ENCODE measurements at regions of chr12 and their contacts with region 1.

Region 1: GRCh38 chr12:76031537-76032073 is at the start of gene PHLDA1:
- DNase-seq: peak; percentile 94
- H3K4me3 Mint-ChIP-seq: peak within 1 kb of the TSS; percentile 97
- H3K27ac Mint-ChIP-seq: peak within 1 kb of the TSS; percentile 97
- H3K4me1 Mint-ChIP-seq: peaks cover 45% of the 10 kb centered on the region
- H3K27me3 Mint-ChIP-seq: no peaks in the 10 kb centered on the region
- total RNA-seq, gene PHLDA1: 43.2 and 44.2 TPM in 2 replicates

Region 2: DNA sequence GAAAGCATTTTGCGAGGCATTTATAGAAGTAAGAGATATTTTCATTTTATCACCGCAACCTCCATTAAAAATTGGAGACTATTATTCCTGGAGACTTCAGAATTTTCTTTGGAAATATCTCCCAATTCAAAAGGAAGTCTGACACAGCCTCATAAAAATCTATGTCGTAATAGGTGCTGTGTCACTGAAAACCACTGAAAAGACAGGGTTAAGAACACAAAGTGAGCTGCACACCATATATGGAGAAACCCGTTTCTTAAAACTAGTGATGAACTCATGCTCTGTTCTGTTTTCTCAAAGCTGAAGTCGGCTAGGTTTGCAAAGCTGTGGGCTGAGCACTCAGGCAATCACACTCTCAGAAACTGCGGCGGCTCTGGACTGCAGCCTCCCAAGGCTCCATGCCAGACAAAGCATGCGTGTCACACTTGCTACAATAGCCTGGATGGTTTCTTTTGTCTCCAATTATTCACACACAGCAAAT is 551.1 kb before region 1 on chr12 and contains the start of gene GLIPR1:
- intact Hi-C with region 1: loop called (anchors 2 kb)
- DNase-seq: peak; percentile 64
- H3K4me3 Mint-ChIP-seq: peak within 1 kb of the TSS; percentile 87
- H3K27ac Mint-ChIP-seq: peak within 1 kb of the TSS; percentile 92
- H3K4me1 Mint-ChIP-seq: peaks cover 73% of the 10 kb centered on the region
- H3K27me3 Mint-ChIP-seq: peaks cover 1% of the 10 kb centered on the region
- total RNA-seq, gene GLIPR1: 7.4 and 7.6 TPM in 2 replicates

Region 3: DNA sequence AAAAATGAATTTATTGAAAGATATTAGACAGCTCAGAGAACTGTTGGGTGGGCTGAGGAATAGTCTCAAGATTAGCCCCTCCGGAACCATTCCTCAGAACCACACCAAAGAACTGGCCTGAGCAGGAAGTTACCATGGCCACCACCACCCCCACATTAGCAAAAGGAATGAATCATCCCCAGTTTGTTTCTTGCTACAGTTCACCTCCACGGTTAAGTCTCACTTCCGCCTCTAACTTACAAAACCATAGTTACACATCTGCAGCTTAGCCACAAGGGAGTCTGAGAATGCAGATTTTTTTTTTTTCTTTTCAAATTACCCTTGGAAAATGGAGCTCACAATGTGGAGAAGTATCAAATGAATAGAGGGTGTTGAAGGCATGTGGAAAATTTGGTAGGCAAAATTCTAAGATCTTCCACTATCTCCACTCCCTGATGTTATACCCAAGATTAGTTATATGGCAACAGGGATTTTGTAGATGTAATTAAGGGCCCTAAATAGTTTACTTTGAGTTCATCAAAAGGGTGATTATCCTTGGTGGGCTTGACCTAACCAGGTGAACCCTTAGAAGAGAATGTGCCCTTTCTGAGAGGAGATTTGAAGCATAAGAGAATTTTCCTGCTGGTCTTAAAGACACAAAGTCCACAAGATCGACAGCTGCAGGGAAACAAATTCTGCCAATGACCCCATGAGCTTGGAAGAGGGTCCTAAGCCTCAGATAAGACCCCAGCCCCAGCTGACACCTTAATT is 390.4 kb before region 1 on chr12:
- intact Hi-C with region 1: loop called (anchors 2 kb)
- DNase-seq: peak; percentile 27
- H3K4me3 Mint-ChIP-seq: no peak overlapping the region
- H3K27ac Mint-ChIP-seq: peak overlapping the region; percentile 76
- H3K4me1 Mint-ChIP-seq: peaks cover 46% of the 10 kb centered on the region
- H3K27me3 Mint-ChIP-seq: peaks cover 12% of the 10 kb centered on the region

Region 4: GRCh38 chr12:75814851-75815754 is 216.5 kb before region 1 on chr12:
- intact Hi-C with region 1: loop called (anchors 2 kb)
- DNase-seq: no peak
- H3K4me3 Mint-ChIP-seq: no peak overlapping the region
- H3K27ac Mint-ChIP-seq: no peak overlapping the region
- H3K4me1 Mint-ChIP-seq: peaks cover 8% of the 10 kb centered on the region
- H3K27me3 Mint-ChIP-seq: peaks cover 9% of the 10 kb centered on the region

Region 5: GRCh38 chr12:75939016-75939642 is 92.5 kb before region 1 on chr12:
- intact Hi-C with region 1: loop called (anchors 1 kb)
- DNase-seq: peak; percentile 20
- H3K4me3 Mint-ChIP-seq: no peak overlapping the region
- H3K27ac Mint-ChIP-seq: no peak overlapping the region
- H3K4me1 Mint-ChIP-seq: peaks cover 14% of the 10 kb centered on the region
- H3K27me3 Mint-ChIP-seq: no peaks in the 10 kb centered on the region

Region 6: DNA sequence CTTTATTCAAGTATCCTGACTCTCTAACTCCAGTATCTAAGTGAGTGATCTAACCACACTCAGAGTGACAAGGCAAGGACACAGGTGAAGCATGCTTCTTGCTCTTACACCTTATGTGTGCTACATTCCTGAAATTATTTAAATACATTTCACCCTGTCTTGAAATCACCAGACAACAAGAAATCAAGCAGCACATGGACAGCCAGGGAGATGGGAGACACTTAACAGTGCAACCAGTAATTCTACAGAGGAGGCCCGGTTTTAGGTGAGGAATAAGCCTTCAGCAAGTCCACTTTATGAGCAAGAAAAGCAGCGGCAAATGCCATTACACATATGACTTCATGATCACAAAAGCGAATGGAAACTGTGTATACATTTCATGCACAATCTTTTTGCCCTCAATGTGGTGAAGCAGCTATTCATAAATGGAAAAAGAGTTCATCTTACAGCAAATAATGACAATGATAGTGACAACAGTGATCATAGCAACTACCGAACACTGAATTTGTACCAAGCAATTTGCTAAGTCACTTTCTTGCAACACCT is 37.3 kb before region 1 on chr12:
- intact Hi-C with region 1: loop called (anchors 1 kb)
- DNase-seq: no peak
- H3K4me3 Mint-ChIP-seq: no peak overlapping the region
- H3K27ac Mint-ChIP-seq: peak overlapping the region; percentile 79
- H3K4me1 Mint-ChIP-seq: peaks cover 56% of the 10 kb centered on the region
- H3K27me3 Mint-ChIP-seq: no peaks in the 10 kb centered on the region

Region 7: DNA sequence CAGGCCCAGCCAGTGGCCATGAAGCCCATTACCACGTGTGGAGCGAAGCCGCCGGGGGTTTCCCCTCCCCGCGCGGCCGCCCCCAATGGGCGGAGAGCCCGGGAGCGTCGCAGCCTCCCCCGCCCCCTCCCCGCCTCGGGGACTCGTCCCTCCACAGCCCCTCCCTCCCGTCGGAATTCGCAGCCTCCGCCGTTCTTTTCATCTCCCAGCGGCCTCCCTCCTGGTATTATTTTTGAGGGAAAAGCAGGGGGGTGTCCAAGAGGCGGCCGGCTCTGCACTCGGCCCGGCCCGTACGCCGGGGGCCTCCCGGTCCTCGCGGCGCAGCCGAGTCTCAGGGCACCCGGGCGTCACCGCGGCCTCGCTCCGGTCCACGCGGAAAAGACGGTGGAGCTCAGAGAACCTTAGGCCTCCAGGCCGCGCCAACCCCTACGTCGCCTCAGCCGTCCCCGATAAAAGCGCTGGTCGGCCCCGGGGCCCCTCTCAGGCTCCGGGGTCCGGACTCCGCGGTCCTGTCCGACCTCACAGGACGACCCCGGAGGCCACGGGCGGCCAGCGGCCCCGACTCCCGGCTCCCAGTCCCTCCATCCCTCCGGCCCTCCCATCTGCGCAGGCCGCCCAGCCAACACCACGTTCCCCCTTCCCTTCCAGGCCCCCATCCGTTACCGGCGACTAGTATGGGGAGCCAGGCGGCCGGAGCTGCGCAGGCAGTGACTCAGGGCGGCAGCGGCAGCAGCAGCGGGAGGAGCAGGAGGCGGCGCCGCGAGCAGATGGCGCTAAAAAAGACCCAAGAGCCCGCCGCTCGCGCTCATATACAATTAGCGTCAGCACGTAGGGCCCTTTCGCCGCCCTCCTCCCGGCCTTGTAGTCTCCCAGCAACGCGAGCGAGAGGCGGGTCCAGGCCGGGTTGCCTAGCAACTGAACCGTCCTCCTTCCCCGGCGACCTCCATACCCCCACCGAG is 52.6 kb after region 1 on chr12 and contains the start of gene NAP1L1:
- intact Hi-C with region 1: loop called (anchors 1 kb)
- DNase-seq: peak; percentile 96
- H3K4me3 Mint-ChIP-seq: peak within 1 kb of the TSS; percentile 94
- H3K27ac Mint-ChIP-seq: peak within 1 kb of the TSS; percentile 99
- H3K4me1 Mint-ChIP-seq: peaks cover 44% of the 10 kb centered on the region
- H3K27me3 Mint-ChIP-seq: no peaks in the 10 kb centered on the region
- total RNA-seq, gene NAP1L1: 701 and 744 TPM in 2 replicates

Measured in activated T-helper 2 cell treated with anti-CD3 and anti-CD28 coated beads, Interferon-gamma antibody, Interleukin-2, Interleukin-4, amounts not matched to agents 10 μg/mL and 5 μg/mL and 100 μg/mL, durations not matched to agents 14 hours and 24 hours and 36 hours (primary cell).